ENCODE measurements at regions of chrX and their contacts with region 1.

Region 1: GRCh38 chrX:17046478-17047097 is 100.1 kb downstream of the REPS2 start:
- H3K4me3 ChIP-seq: no peak overlapping the region
- H3K27ac ChIP-seq: no peak overlapping the region
- H3K4me1 ChIP-seq: no peaks in the 10 kb centered on the region
- CTCF ChIP-seq: peak; percentile 67

Region 2: GRCh38 chrX:16870095-16870860 is 176.3 kb before region 1 on chrX and contains the start of gene RBBP7:
- CTCF ChIA-PET with region 1: interaction called, 11 read pairs
- POLR2A ChIA-PET with region 1: interaction called, 5 read pairs
- H3K4me3 ChIP-seq: peak within 1 kb of the TSS; percentile 98
- H3K27ac ChIP-seq: peak within 1 kb of the TSS; percentile 100
- H3K4me1 ChIP-seq: peaks cover 8% of the 10 kb centered on the region
- CTCF ChIP-seq: no peak; the same call in 1 of the 2 replicates

Region 3: DNA sequence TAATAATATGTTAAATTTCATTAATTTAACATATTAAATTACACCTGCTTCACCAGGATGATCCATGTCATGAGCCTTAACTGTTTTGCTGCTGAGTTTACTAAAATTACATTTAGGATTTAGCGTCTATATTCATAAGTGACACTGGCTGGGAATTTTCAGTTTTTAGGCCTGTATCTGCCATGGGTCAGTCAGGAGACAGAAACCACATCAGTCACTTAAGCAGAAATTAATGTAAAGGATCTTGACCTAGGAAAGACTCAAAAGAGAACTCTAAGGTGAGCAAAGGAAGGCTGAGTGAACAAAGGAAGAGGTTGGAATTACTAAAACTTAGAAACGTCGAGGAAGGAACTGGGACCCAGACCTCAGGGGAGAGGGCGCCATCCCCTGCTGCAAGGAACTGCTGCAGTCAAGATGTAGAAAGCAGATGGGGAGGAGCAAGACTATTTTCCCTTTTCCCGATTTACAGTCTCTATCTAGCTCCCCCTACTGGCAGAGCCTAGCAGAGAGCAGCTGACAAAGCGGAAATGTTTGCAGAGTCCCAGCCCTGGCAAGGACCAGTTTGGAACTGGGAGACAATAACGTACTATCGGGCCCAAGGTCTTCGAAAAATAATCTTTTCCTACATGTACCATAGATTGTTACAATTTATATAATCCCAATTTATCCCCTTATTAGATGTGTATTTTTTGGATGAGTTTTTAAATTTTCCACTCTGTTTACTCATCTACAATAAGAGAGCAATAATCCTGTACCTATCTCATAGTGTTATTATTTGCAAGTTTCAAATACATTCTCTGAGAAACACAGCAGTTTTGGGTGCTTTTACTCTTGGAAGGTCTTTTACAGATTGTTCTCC is 153.9 kb before region 1 on chrX:
- CTCF ChIA-PET with region 1: interaction called, 192 read pairs
- POLR2A ChIA-PET with region 1: no interaction called
- H3K4me3 ChIP-seq: no peak overlapping the region
- H3K27ac ChIP-seq: no peak overlapping the region
- H3K4me1 ChIP-seq: no peaks in the 10 kb centered on the region
- CTCF ChIP-seq: peak; percentile 78

Region 4: GRCh38 chrX:17007206-17007683 is 39.3 kb before region 1 on chrX:
- CTCF ChIA-PET with region 1: interaction called, 13 read pairs
- POLR2A ChIA-PET with region 1: no interaction called
- H3K4me3 ChIP-seq: no peak overlapping the region
- H3K27ac ChIP-seq: no peak overlapping the region
- H3K4me1 ChIP-seq: no peaks in the 10 kb centered on the region
- CTCF ChIP-seq: 0 out of 2 replicates have a peak, but pooled peaks have one; percentile 22

Region 5: GRCh38 chrX:17062065-17062464 is 15.5 kb after region 1 on chrX:
- CTCF ChIA-PET with region 1: interaction called, 18 read pairs
- POLR2A ChIA-PET with region 1: interaction called, 3 read pairs
- H3K4me3 ChIP-seq: no peak overlapping the region
- H3K27ac ChIP-seq: no peak overlapping the region
- H3K4me1 ChIP-seq: no peaks in the 10 kb centered on the region
- CTCF ChIP-seq: no peak

Measured in HEK293 (cell line).